ENCODE measurements at regions of chr2 and their contacts with region 1.

Region 1: DNA sequence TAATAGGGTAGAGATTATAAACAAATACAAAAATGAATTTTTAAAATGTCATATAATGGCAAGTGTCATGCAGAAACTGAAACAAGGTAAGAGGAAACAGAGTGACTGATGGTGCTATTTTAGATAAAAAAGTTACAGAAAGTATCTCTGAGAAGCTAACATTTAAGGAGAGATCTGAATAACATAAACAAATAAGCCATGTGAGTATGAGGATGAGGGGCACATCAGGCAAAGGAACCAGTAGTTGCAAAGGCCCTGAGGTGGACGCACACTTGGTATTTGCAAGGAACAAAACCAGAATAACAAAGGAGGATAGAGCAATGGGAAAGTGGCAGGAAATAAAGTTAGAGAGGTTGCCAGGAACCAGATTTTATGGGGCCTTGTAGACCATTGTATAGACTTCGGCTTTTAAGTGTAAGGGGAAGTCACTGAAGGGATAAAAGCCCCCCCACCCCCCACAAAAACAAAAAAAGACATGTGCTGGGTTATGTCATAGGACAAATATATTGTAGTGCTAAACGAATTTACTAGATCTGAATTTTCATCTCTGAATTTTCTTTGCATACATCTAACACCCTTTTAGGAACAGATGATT is 159.2 kb downstream of the DTNB start:
- DNase-seq: no peak
- ATAC-seq: no peak
- H3K4me3 ChIP-seq: no peak overlapping the region
- H3K27ac ChIP-seq: no peak overlapping the region
- H3K4me1 ChIP-seq: no peaks in the 10 kb centered on the region; the same call in 1 of the 2 replicates
- H3K27me3 ChIP-seq: no peaks in the 10 kb centered on the region
- CTCF ChIP-seq: no peak
- POLR2A ChIP-seq: no peak
- RAD21 ChIP-seq: no peak

Region 2: GRCh38 chr2:25276569-25277465 is 237.3 kb before region 1 on chr2:
- CTCF ChIA-PET with region 1: no interaction called
- POLR2A ChIA-PET with region 1: interaction called, 13 read pairs
- dilution Hi-C with region 1: no loop called
- in situ Hi-C with region 1: no loop called
- intact Hi-C with region 1: no loop called
- DNase-seq: no peak
- ATAC-seq: no peak
- H3K4me3 ChIP-seq: no peak overlapping the region
- H3K27ac ChIP-seq: no peak overlapping the region
- H3K4me1 ChIP-seq: peaks cover 5% of the 10 kb centered on the region
- H3K27me3 ChIP-seq: no peaks in the 10 kb centered on the region
- CTCF ChIP-seq: 0 out of 2 replicates have a peak, but pooled peaks have one; percentile 11
- POLR2A ChIP-seq: no peak
- RAD21 ChIP-seq: no peak

Region 3: DNA sequence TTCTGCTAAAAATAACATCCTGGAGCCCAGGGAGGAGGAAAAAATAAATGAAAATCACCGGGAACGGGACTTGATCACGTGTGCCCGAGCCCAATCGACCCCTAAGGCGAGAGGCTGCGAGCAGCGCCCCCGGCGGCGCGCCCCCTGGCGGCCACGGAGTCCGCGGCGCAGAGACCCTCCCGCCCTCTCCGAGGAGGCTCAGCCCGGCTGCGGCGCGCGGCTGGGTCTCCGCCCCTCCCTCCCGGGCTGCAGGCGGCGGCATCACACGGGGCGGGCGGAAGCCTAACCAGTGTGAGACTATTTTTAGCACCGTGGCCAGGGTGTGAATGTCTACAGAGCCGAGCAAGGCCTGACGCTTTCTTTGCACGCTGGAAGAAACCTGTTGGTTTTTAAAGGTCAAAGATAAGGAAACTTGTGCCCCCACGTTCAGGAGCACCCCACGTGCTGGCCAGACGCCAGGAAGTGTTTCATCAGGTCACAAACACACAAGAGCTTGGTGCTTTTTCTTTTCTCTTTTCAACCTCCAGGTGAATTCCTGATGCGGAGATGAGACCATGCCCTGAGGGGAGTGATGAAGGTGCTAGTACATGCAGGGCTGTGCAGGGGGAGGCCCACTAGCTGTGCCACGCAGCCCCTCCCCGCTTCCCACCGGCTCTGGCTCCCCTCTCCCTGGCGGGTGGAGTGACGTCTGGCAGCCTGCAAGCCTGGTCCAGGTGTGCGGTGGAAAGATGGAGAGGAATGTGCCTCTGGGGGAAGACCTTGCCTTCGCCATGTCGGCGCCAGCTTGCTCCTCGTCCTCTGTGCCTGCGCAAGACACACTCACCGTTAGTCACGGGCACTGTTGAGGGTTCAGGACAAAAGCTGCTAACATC is 137.2 kb before region 1 on chr2:
- CTCF ChIA-PET with region 1: no interaction called
- POLR2A ChIA-PET with region 1: no interaction called
- dilution Hi-C with region 1: no loop called
- in situ Hi-C with region 1: no loop called
- intact Hi-C with region 1: no loop called
- DNase-seq: peak; percentile 79
- ATAC-seq: peak; percentile 100
- H3K4me3 ChIP-seq: peak overlapping the region; percentile 18; the same call in 1 of the 2 replicates
- H3K27ac ChIP-seq: no peak overlapping the region
- H3K4me1 ChIP-seq: peaks cover 8% of the 10 kb centered on the region
- H3K27me3 ChIP-seq: no peaks in the 10 kb centered on the region
- CTCF ChIP-seq: peak; percentile 96
- POLR2A ChIP-seq: 0 out of 2 replicates have a peak, but pooled peaks have one; percentile 38
- RAD21 ChIP-seq: peak; percentile 68

Region 4: DNA sequence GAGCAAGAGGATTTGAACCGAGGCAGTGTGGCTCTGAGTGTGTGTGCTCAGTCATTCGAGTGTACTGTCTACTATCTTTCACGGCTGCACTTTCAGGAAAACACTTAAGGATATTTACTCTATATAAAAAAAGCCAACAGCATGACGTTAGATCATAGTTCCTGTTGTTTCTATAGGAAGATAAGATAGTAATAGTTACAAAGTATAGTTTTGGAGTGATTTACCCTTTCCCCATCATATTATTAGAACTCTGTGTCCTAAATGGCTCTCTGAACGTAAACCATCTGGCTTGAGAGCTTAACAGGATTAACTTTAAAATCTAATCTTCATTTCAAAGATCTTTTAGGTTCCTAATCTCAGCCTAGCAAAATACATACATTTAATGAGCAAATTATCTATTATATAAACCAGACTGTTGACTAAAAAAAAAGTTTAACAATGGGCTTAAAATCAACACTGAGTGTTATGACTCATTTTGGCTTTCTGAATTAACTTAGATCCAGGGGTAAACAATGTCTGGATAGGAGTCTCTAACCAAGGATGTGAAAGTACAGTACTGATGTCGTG is 22.1 kb before region 1 on chr2:
- CTCF ChIA-PET with region 1: no interaction called
- POLR2A ChIA-PET with region 1: no interaction called
- dilution Hi-C with region 1: no loop called
- in situ Hi-C with region 1: no loop called
- intact Hi-C with region 1: loop called (anchors 2 kb)
- DNase-seq: peak; percentile 80
- ATAC-seq: peak; percentile 84
- H3K4me3 ChIP-seq: no peak overlapping the region
- H3K27ac ChIP-seq: no peak overlapping the region
- H3K4me1 ChIP-seq: peaks cover 4% of the 10 kb centered on the region; the same call in 1 of the 2 replicates
- H3K27me3 ChIP-seq: no peaks in the 10 kb centered on the region
- CTCF ChIP-seq: no peak
- POLR2A ChIP-seq: no peak
- RAD21 ChIP-seq: no peak

Region 5: DNA sequence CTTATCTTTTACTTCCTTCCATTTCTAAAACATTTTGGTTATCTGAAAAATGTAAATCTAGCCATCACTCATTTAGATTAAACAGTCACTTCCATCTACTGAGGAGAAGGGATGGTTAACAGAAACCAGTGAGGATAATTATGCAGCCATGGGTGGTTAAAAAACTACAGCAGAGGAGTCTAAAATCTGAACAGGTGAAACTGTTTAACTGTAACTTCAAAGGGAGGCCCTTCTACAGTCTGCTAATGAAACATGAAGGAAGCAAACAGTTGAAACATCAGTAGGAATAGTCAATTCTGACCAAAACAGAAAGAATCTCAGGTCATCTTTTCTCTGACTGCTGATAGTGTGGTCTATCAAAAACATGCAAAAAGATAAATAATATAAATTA is 88.2 kb after region 1 on chr2:
- CTCF ChIA-PET with region 1: no interaction called
- POLR2A ChIA-PET with region 1: no interaction called
- dilution Hi-C with region 1: no loop called
- in situ Hi-C with region 1: no loop called
- intact Hi-C with region 1: no loop called
- DNase-seq: no peak
- ATAC-seq: no peak
- H3K4me3 ChIP-seq: no peak overlapping the region
- H3K27ac ChIP-seq: no peak overlapping the region
- H3K4me1 ChIP-seq: no peaks in the 10 kb centered on the region
- H3K27me3 ChIP-seq: no peaks in the 10 kb centered on the region
- CTCF ChIP-seq: no peak
- POLR2A ChIP-seq: no peak
- RAD21 ChIP-seq: no peak